ENCODE measurements at regions of chrX and their contacts with region 1.

Region 1: GRCh38 chrX:1727531-1728027 is 112.7 kb downstream of the ASMT start:
- DNase-seq: no peak
- H3K4me3 ChIP-seq: no peak overlapping the region
- H3K27ac ChIP-seq: no peak overlapping the region
- H3K4me1 ChIP-seq: no peaks in the 10 kb centered on the region
- H3K27me3 ChIP-seq: no peaks in the 10 kb centered on the region
- CTCF ChIP-seq: no peak

Region 2: DNA sequence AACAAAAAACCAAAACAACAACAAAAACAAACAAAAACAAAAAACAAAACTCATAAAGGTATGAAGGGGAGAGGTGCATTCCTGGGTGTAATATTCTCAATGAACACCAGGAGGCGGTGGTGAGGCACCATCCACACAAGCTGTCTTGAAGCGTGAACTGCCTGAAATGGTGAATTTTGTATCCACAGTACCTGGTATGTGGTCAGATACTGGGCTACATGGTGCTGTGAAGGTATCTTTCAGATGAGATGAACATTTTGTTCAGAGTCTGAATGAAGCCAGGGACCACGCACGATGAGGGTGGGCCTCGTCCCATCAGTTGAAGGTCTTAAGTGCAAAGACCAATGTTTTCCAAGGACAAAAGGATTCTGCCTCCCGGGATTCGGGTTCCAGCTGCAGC is 54.2 kb before region 1 on chrX:
- CTCF ChIA-PET with region 1: no interaction called
- POLR2A ChIA-PET with region 1: no interaction called
- intact Hi-C with region 1: loop called (anchors 10 kb)
- DNase-seq: peak; percentile 53
- H3K4me3 ChIP-seq: no peak overlapping the region
- H3K27ac ChIP-seq: no peak overlapping the region
- H3K4me1 ChIP-seq: no peaks in the 10 kb centered on the region
- H3K27me3 ChIP-seq: no peaks in the 10 kb centered on the region
- CTCF ChIP-seq: peak; percentile 80